ENCODE measurements at regions of chr2 and their contacts with region 1.

Region 1: DNA sequence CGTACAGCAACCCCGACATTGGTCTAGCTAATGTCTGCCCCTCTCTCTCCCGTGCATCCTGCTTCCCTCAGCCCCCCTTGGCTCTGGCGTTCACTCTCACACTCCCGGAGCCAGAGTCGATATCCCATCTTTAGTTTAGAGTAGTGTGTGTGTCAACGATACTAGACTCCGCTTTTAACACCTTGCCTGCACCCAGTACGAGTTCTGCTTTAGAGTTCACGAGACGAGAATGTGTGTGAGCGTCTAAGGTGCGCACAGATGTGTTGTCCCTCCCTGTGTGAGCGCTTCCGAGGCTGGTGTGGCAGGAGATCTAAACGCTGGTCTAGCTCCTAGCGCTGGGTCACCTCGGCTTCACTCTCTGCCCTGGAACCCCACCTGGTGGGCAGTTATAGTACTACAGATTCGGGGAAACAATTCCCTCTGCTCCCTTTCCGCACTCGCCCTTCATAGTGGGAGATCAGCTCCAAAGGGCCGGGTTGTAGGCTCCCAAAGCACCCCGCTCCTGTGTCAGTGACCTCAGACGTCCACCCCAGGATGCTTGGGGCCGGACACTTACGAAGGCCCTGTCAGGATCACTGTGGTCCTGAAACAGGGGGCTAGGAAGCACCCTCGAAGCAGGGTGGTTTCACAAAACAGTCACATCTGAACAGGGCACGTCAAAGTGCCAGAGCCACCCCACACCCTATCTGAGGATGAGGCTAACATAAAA is 2.6 kb upstream of the CYP26B1 start:
- DNase-seq: peak; percentile 75
- ATAC-seq: peak; percentile 90
- H3K4me3 ChIP-seq: peak overlapping the region; percentile 50
- H3K27ac ChIP-seq: no peak overlapping the region
- H3K4me1 ChIP-seq: peaks cover 35% of the 10 kb centered on the region
- H3K27me3 ChIP-seq: peaks cover 65% of the 10 kb centered on the region
- CTCF ChIP-seq: peak; percentile 82

Region 2: DNA sequence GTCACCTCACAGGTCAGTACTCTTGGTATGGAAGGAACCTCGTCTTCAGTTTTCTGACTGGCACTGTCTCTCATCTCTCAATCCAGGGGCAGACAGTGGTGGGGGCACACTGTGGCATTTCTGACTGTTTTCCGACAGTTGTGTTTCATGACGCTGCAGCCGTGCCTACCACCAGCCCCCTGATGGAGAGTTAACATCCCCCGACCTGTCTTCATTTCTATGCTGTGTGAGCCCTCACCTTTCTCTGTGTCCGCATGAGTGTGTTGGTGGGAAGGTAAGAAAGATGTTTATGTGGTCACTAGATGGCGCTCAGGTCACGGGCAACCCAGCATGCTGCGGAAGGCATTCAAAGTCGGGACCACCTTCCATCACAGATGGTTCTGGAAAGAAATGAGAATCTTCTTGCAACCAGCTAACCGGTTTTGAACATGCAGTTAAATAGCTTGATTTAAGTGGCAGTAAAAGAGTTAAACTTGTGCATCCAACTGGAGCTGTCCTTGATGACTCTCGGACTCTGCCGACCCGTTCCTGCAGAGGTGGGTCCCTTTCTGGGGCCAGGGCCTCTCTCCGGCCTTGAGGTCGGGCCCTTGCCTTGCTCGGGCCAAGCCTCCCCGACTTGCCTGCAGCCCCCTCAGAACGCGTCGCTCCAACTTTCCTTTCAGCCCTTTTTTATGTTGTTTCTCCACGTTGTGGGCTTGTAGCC is 604.6 kb before region 1 on chr2:
- intact Hi-C with region 1: loop called (anchors 5 kb)
- DNase-seq: peak; percentile 49
- ATAC-seq: peak; percentile 78
- H3K4me3 ChIP-seq: peak overlapping the region; percentile 5
- H3K27ac ChIP-seq: peak overlapping the region; percentile 15
- H3K4me1 ChIP-seq: peaks cover 12% of the 10 kb centered on the region
- H3K27me3 ChIP-seq: no peaks in the 10 kb centered on the region
- CTCF ChIP-seq: peak; percentile 65

Region 3: DNA sequence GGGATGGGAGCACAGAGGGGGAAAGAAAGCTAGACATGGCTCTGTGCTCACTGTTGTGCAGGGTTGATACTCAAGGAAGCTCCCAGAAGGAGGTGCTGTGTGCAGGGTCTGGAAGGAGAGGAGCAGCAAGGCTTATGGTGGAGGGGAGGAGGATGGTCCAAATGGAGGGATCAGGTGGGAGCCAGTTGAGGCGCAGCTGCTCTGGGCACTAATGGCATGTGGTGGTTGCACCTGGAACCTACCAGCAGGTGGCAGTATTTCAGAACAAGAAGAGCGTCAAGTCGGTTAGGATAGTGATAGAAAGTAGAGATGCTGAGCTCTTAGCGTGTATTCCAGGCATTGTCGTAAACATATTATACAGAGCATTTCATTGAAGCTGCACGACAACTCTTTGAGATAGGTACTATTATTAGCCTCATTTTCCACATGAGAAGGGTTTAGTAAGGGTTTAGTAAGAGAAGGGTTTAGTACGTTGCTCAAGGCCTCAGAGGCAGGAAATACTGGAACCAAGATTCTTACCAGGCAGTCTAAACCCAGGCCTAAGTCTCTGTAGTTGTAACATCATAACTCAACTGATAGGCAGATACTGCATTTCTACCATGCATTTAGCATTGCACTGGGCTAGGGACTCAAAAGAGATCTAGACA is 226.3 kb before region 1 on chr2:
- intact Hi-C with region 1: loop called (anchors 10 kb)
- DNase-seq: peak; percentile 68
- ATAC-seq: peak; percentile 75
- H3K4me3 ChIP-seq: no peak overlapping the region
- H3K27ac ChIP-seq: no peak overlapping the region
- H3K4me1 ChIP-seq: no peaks in the 10 kb centered on the region
- H3K27me3 ChIP-seq: no peaks in the 10 kb centered on the region
- CTCF ChIP-seq: peak; percentile 81

Region 4: DNA sequence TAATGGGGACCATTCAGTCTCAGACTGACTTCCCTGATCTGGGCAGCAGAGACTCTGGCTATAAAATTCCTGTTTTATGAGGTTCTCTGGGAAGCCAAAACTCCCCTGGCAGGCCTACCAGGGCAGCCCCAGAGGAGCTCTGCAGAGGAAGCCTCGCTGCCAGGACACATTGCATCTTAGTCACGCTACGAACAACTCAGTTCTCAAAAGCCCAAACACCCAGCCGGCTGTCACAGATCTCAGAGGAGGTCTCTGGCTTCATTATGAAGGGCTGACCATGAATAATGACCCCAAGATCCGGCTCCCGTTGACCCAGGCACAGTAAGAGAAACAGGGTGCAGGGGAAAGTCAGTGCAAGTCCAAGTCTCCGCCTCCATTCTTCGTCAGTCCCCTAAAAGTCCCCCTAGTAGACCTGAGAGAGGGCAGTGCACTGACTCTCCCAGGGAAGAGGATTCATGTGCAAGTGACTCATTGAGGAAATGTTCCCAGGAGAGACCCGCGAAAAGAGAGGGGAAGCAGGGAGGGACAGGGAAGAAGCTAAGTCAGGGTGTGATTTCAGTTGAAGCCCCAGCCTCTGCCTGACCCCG is 215.0 kb before region 1 on chr2:
- intact Hi-C with region 1: no loop called
- DNase-seq: peak; percentile 56
- ATAC-seq: peak; percentile 4
- H3K4me3 ChIP-seq: no peak overlapping the region
- H3K27ac ChIP-seq: no peak overlapping the region
- H3K4me1 ChIP-seq: no peaks in the 10 kb centered on the region
- H3K27me3 ChIP-seq: no peaks in the 10 kb centered on the region
- CTCF ChIP-seq: no peak

Measured in upper lobe of right lung (tissue), 1 donor.